CD4-positive, alpha-beta T cell (primary cell): ENCODE measurements at regions of chr11 and their contacts with region 1.

Region 1: GRCh38 chr11:60970369-60970774 is 1.1 kb upstream of the CD6 start:
- DNase-seq: peak; percentile 71 to 90 (median 80)
- ATAC-seq: peak; percentile 71
- H3K4me3 ChIP-seq: peak overlapping the region; percentile 96
- H3K4me3 Mint-ChIP-seq: peak overlapping the region; percentile 90
- H3K27ac ChIP-seq: peak overlapping the region; percentile 83 to 93
- H3K27ac Mint-ChIP-seq: peak overlapping the region; percentile 94
- H3K4me1 ChIP-seq: peaks cover 29% of the 10 kb centered on the region
- H3K4me1 Mint-ChIP-seq: peaks cover 25% of the 10 kb centered on the region
- H3K27me3 ChIP-seq: no peaks in the 10 kb centered on the region
- H3K27me3 Mint-ChIP-seq: no peaks in the 10 kb centered on the region
- CTCF ChIP-seq: peak; percentile 97

Region 2: DNA sequence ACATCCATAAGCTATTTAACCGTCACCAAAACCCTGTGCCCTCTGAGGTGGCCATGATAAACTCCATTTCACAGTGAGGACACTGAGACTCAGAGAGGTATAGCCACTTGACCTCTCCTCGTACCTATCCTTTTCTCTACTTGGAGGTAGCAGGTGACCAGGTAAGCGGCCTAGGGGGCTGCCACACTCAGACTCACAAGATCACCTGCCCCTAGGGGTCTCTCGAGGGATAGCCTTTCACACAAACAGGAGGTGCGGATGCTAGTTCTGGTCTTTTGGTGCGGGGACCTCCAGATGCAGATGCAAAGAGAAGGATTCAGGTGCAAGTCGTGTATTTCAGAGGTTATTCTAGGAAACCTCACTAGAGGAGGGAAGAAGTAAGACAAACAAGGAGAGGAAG is 231.3 kb before region 1 on chr11:
- CTCF ChIA-PET with region 1: no interaction called
- POLR2A ChIA-PET with region 1: no interaction called
- intact Hi-C with region 1: no loop called
- DNase-seq: no peak
- ATAC-seq: no peak
- H3K4me3 ChIP-seq: no peak overlapping the region
- H3K4me3 Mint-ChIP-seq: no peak overlapping the region
- H3K27ac ChIP-seq: no peak overlapping the region
- H3K27ac Mint-ChIP-seq: no peak overlapping the region
- H3K4me1 ChIP-seq: no peaks in the 10 kb centered on the region
- H3K4me1 Mint-ChIP-seq: no peaks in the 10 kb centered on the region
- H3K27me3 ChIP-seq: peaks cover 0 to 3% of the 10 kb centered on the region in 2 experiments
- H3K27me3 Mint-ChIP-seq: peaks cover 33% of the 10 kb centered on the region
- CTCF ChIP-seq: no peak

Region 3: DNA sequence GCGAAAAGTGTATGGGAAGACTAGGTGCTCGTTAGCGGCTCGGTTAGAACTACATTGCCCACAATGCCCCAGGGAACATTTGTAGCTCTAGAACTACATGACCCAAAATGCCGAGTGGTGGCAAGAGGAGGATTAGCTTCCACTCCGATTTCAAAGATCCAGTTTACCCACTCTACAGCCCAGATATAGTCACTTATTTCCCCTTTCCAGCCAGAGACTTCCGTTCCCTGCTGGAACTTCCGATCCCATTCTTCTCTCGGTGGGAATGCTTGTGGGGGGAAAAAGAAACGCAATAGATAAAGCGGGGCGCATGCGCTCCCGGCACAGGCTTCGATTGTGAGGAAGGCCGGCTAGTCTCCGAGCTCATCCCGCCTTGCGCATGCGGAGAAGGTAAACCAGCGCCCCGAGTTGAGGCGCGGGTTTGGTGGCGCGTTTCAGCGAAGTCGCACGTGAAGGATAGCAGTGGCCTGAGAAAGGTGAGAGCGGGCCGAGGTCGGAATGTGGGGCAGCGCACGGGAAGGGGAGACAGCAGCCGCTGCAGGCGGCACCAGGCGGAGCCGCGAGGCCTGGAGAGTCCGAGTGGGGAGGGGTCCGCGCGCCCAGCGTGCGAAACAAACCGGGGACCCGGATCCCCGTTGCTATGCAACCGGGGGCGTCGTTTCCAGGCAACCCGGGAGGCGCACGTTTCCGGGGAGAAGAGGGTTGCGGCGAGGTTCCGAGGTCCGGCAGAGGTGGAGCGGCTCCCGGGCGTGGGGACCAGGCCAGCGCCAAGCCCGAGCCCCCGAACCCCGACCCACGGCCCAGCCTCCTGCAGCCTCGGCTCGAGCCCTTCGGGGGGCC is 56.4 kb before region 1 on chr11 and contains the start of gene TMEM109:
- CTCF ChIA-PET with region 1: interaction called, 12 read pairs
- POLR2A ChIA-PET with region 1: no interaction called
- intact Hi-C with region 1: no loop called
- DNase-seq: peak; percentile 80 to 95 (median 85)
- ATAC-seq: peak; percentile 67
- H3K4me3 ChIP-seq: peak within 1 kb of the TSS; percentile 95
- H3K4me3 Mint-ChIP-seq: peak within 1 kb of the TSS; percentile 98
- H3K27ac ChIP-seq: peak within 1 kb of the TSS; percentile 97 to 98
- H3K27ac Mint-ChIP-seq: peak within 1 kb of the TSS; percentile 92
- H3K4me1 ChIP-seq: peaks cover 68% of the 10 kb centered on the region
- H3K4me1 Mint-ChIP-seq: peaks cover 65% of the 10 kb centered on the region
- H3K27me3 ChIP-seq: no peaks in the 10 kb centered on the region
- H3K27me3 Mint-ChIP-seq: no peaks in the 10 kb centered on the region
- CTCF ChIP-seq: no peak
- total RNA-seq, gene TMEM109: 27.8 to 32.9 TPM

Region 4: GRCh38 chr11:60992842-60993409 is 22.6 kb after region 1 on chr11:
- CTCF ChIA-PET with region 1: interaction called, 16 read pairs
- POLR2A ChIA-PET with region 1: no interaction called
- intact Hi-C with region 1: no loop called
- DNase-seq: peak in 1 of 14 experiments; percentile 15
- ATAC-seq: no peak
- H3K4me3 ChIP-seq: no peak overlapping the region
- H3K4me3 Mint-ChIP-seq: peak overlapping the region; percentile 78
- H3K27ac ChIP-seq: peak overlapping the region; percentile 22 to 61
- H3K27ac Mint-ChIP-seq: peak overlapping the region; percentile 87
- H3K4me1 ChIP-seq: peaks cover 89% of the 10 kb centered on the region
- H3K4me1 Mint-ChIP-seq: peaks cover 83% of the 10 kb centered on the region
- H3K27me3 ChIP-seq: no peaks in the 10 kb centered on the region
- H3K27me3 Mint-ChIP-seq: no peaks in the 10 kb centered on the region
- CTCF ChIP-seq: no peak

Region 5: DNA sequence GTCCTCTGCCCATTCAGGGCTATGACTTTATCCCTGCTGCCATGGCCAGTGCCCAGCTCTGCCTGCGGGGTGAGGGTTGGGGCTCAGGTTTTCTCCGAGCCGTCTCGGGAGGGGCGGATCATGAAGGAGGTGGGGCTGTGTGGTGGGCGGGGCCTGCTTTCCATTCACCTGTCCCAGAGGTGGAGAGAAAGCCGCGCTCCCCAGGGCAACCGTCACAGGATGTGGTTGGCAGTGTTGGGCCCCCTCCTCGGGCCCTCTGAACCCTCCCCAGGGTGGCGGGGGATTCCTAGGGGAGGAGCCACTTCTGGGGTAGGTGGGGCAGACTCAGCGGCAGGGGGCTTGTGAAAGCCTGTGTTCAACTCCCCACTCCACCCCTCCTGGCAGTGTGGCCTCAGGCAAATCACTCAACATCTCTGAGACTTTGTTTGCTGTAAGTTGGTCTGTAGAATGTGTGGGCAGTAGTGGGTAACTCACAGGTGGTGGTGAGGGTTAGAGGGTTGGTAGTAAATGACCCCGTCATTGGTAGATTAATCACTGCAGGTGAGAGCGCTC is 51.4 kb after region 1 on chr11:
- CTCF ChIA-PET with region 1: interaction called, 8 read pairs
- POLR2A ChIA-PET with region 1: interaction called, 6 read pairs
- intact Hi-C with region 1: loop called in 1 of 2 experiments (anchors 2 kb)
- DNase-seq: peak; percentile 82 to 97 (median 92)
- ATAC-seq: peak; percentile 71
- H3K4me3 ChIP-seq: peak overlapping the region; percentile 21
- H3K4me3 Mint-ChIP-seq: peak overlapping the region; percentile 87
- H3K27ac ChIP-seq: peak overlapping the region; percentile 81 to 88
- H3K27ac Mint-ChIP-seq: peak overlapping the region; percentile 99
- H3K4me1 ChIP-seq: peaks cover 85% of the 10 kb centered on the region
- H3K4me1 Mint-ChIP-seq: peaks cover 85% of the 10 kb centered on the region
- H3K27me3 ChIP-seq: no peaks in the 10 kb centered on the region
- H3K27me3 Mint-ChIP-seq: no peaks in the 10 kb centered on the region
- CTCF ChIP-seq: no peak

Region 6: GRCh38 chr11:61129639-61130523 is 159.5 kb after region 1 on chr11:
- CTCF ChIA-PET with region 1: interaction called, 4 read pairs
- POLR2A ChIA-PET with region 1: no interaction called
- intact Hi-C with region 1: loop called (anchors 1 kb)
- DNase-seq: peak; percentile 86 to 94 (median 88)
- ATAC-seq: peak; percentile 84
- H3K4me3 ChIP-seq: no peak overlapping the region
- H3K4me3 Mint-ChIP-seq: peak overlapping the region; percentile 52
- H3K27ac ChIP-seq: peak overlapping the region; percentile 29 to 50
- H3K27ac Mint-ChIP-seq: peak overlapping the region; percentile 50
- H3K4me1 ChIP-seq: peaks cover 25% of the 10 kb centered on the region
- H3K4me1 Mint-ChIP-seq: peaks cover 39% of the 10 kb centered on the region
- H3K27me3 ChIP-seq: no peaks in the 10 kb centered on the region
- H3K27me3 Mint-ChIP-seq: no peaks in the 10 kb centered on the region
- CTCF ChIP-seq: peak; percentile 99

Region 7: GRCh38 chr11:61270354-61271076 is 300.1 kb after region 1 on chr11:
- CTCF ChIA-PET with region 1: no interaction called
- POLR2A ChIA-PET with region 1: no interaction called
- intact Hi-C with region 1: no loop called
- DNase-seq: no peak
- ATAC-seq: no peak
- H3K4me3 ChIP-seq: no peak overlapping the region
- H3K4me3 Mint-ChIP-seq: no peak overlapping the region
- H3K27ac ChIP-seq: no peak overlapping the region
- H3K27ac Mint-ChIP-seq: no peak overlapping the region
- H3K4me1 ChIP-seq: no peaks in the 10 kb centered on the region
- H3K4me1 Mint-ChIP-seq: no peaks in the 10 kb centered on the region
- H3K27me3 ChIP-seq: no peaks in the 10 kb centered on the region
- H3K27me3 Mint-ChIP-seq: no peaks in the 10 kb centered on the region
- CTCF ChIP-seq: no peak

Region 8: DNA sequence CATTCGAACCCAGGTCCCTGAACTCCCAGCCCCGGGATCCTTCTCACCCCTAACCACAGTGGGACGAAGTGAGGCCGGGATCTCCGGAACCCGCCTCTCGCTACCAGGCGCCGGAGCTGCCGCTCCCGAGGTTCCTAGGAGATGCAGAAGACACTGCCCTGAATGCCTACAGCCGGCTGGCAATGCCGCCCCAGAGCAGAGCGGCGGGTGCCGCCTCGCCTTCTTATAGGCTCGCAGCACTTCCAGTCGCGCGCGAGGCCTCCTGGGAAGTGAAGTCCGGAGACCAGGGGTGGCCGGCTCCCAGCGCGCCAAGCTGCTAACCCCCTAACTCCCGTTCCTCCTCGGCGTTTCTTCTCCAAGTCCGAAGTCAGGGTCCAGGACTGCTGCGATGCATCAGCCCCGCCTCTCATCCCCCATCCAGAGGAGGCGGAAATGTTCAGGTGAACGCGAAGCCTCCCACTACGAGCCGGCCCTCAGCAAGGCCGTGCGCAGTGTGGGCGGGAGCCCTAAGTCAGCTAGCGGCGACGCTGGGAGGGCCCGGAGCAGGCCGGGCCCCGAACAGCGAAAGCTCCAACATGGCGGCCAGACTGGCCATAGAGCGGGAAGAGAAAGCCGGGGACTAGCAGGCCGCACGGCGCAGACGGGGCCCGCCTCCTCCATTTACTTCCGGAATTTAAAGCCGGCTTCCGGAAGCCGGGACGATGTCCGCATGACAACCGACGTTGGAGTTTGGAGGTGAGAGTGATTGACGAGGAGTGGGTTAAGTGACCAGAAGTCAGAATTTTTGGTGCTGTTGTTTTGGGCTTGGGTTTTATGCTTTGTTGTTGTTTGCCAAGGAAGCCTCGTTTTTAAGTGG is 391.5 kb after region 1 on chr11 and contains the starts of genes CYB561A3 and TMEM138:
- CTCF ChIA-PET with region 1: no interaction called
- POLR2A ChIA-PET with region 1: no interaction called
- intact Hi-C with region 1: no loop called
- DNase-seq: peak; percentile 75 to 94 (median 82)
- ATAC-seq: peak; percentile 84
- H3K4me3 ChIP-seq: peak within 1 kb of the TSS; percentile 99
- H3K4me3 Mint-ChIP-seq: peak within 1 kb of the TSS; percentile 99
- H3K27ac ChIP-seq: peak within 1 kb of the TSS; percentile 95 to 100
- H3K27ac Mint-ChIP-seq: peak within 1 kb of the TSS; percentile 100
- H3K4me1 ChIP-seq: peaks cover 35% of the 10 kb centered on the region
- H3K4me1 Mint-ChIP-seq: peaks cover 36% of the 10 kb centered on the region
- H3K27me3 ChIP-seq: no peaks in the 10 kb centered on the region
- H3K27me3 Mint-ChIP-seq: no peaks in the 10 kb centered on the region
- CTCF ChIP-seq: no peak
- total RNA-seq, gene CYB561A3: 24.4 to 25.8 TPM
- total RNA-seq, gene TMEM138: 59.2 to 60.9 TPM